Astrocyte of the cerebellum (primary cell): ENCODE measurements at regions of chr13 and their contacts with region 1.

Region 1: DNA sequence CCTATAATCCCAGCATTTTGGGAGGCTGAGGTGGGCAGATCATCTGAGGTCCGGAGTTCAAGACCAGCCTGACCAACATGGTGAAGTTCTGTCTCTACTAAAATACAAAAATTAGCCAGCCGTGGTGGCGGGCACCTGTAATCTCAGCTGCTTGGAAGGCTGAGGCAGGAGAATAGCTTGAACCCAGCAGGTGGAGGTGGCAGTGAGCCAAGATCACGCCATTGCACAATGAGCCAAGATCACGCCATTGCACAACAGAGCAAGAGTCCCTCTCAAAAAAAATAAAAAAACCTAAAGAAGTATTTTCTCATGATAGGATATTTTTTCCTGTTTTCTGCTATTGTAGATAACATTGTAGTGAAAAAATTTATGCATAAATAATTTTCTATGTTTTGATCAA is 13.3 kb downstream of the IFT88 start:
- DNase-seq: no peak
- H3K4me3 ChIP-seq: no peak overlapping the region
- CTCF ChIP-seq: no peak

Region 2: DNA sequence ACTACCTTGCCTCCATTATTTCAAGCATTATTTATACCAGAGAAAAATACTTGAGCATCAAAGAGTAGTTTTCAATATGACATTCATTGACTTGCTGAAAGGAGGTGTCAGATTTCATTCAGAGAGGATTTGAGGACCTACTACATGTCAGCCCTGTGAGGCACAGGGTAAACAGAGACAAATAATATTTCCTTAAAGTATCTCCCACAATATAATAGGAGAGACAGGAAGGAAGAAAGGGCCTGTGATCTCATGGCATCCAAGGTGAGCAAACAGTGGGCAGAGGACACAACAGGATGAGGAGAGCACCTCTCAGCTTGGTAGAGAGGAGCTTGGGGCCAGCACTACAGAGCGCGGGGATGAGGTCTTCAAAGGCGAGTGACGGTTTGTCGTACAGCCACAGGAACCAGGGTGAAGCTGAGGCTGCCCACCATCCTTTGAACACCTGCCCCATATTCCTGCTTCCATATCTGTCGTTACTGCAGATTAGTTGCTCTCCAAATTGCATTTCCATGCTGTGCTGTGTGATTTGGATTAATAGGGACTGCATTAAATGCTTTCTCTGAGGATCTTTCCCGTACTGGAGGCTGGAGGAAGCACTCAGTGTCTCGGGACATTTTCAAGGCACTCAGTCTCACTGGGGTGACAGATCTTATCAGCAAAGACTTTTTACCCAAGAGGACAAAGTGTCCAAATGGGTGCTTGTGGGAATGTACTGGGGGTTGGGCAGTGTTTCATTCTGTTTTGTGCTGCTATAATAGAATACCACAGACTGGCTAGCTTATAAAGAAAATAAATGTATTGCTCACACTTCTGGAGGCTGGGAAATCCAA is 478.6 kb before region 1 on chr13:
- in situ Hi-C with region 1: no loop called
- DNase-seq: no peak
- H3K4me3 ChIP-seq: no peak overlapping the region
- CTCF ChIP-seq: no peak

Region 3: GRCh38 chr13:20219577-20219976 is 360.7 kb before region 1 on chr13:
- in situ Hi-C with region 1: no loop called
- DNase-seq: no peak
- H3K4me3 ChIP-seq: no peak overlapping the region
- CTCF ChIP-seq: no peak

Region 4: DNA sequence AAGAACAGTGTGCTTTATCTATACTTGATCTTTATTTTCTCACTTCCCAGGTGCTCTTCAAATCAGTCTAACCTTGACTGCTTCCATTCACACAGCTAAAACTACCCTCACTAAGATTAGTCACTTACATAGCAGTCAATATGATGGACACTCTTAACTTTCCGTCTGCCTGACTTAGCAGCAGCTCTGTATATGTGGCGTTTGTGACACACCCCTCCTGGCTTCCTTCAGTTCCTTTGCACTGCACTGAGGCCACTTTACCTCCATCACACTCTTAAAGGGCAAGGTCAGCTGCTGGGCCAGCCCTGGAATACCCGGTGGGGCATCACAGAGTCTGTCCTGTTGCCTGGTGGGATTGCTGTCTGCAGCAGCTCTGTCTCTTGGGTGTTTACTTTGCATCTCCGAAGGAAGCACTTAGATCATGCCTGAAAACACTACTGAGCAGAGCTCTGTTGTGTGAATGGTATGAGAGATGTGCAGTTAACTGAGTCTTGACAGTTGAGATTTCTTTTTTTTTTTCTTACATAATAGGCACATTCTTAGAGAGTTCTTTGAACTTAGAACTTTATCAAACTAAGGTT is 87.7 kb after region 1 on chr13:
- in situ Hi-C with region 1: loop called (anchors 10 kb)
- DNase-seq: no peak
- H3K4me3 ChIP-seq: no peak overlapping the region
- CTCF ChIP-seq: no peak